Left cardiac atrium (tissue), 4 donors: ENCODE measurements at regions of chr7 and their contacts with region 1.

Region 1: GRCh38 chr7:129218514-129219062 is 6.2 kb upstream of the AHCYL2 start:
- DNase-seq: peak; percentile 88
- ATAC-seq: peak; percentile 91 to 92

Region 2: DNA sequence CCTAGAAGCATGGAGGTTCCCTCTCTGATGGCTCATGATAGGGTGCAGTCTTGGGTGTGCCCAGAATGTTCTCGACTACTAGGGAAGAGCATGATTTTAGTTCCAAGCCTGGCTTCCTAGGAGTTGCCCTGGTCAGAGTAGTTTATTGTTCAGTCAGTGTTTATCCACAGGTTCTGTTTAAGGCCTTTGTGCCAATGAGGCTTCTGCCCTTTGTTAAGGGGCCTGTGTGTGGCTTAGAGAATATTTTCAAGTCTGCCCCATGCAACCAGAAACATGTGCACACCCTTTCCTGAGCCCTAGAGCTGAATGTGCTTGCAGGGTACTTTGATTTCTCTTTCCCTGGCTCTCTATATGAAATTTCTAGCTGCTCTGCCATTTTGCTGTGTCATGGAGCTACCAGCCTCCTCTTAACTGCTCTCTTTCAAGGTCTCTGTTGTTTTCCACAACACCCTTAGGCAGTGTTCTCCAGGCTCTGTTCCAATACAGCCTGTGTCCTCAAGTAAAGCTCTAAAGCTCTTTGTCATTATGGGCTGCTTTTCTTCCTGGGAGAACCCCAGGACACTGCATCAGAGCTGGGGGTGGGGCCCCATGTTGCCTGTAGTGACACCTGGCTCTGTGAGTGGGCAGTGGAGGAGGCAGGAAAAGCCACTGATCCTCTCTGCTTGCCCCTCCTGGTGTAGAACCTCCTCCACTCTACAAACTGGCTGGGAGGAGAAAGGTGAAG is 108.2 kb before region 1 on chr7:
- intact Hi-C with region 1: no loop called
- DNase-seq: no peak
- ATAC-seq: no peak

Region 3: DNA sequence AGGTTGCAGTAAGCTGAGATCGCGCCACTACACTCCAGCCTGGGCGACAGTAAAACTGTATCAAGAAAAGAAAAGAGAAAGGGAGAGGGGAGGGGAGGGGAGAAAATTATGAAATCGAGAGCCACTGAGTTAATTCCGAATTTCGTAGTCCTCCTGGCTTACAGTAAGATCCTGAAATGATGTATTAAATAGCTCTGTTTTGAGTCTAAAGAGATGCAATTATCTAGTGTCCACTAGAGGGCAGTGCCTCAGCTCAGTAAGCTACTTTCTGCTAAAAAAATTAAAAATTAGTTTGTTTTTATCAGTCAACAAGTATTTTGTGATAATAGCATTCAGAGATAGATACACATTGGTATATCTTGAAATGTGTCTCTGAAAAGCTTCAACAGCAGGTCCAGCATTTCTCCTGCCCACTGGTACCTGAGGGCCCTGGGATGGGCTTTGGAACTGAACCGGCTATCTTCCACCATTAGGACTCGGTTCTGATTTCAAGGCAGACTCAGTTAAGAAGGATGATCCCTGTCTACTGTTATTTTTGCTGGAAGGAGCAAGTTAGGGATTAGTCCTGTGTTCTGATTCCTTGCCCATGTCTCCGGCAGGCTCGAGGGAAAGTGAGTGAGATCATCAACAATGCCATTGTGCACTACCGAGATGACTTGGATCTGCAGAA is 54.6 kb before region 1 on chr7:
- intact Hi-C with region 1: loop called in 1 of 2 experiments (anchors 10 kb)
- DNase-seq: no peak
- ATAC-seq: no peak

Region 4: GRCh38 chr7:129298268-129298893 is 79.8 kb after region 1 on chr7:
- intact Hi-C with region 1: loop called (anchors 2 to 5 kb)
- DNase-seq: peak; percentile 44
- ATAC-seq: no peak

Region 5: GRCh38 chr7:129471402-129471827 is 252.8 kb after region 1 on chr7:
- intact Hi-C with region 1: loop called in 1 of 2 experiments (anchors 5 kb)
- DNase-seq: no peak
- ATAC-seq: no peak